Panc1 (cell line): ENCODE measurements at regions of chr13 and their contacts with region 1.

Region 1: GRCh38 chr13:19822673-19823072 is 39.9 kb upstream of the PSPC1 start:
- DNase-seq: no peak
- ATAC-seq: no peak
- H3K4me3 ChIP-seq: no peak overlapping the region
- H3K27ac ChIP-seq: no peak overlapping the region
- H3K4me1 ChIP-seq: no peaks in the 10 kb centered on the region
- H3K27me3 ChIP-seq: no peaks in the 10 kb centered on the region
- CTCF ChIP-seq: no peak

Region 2: DNA sequence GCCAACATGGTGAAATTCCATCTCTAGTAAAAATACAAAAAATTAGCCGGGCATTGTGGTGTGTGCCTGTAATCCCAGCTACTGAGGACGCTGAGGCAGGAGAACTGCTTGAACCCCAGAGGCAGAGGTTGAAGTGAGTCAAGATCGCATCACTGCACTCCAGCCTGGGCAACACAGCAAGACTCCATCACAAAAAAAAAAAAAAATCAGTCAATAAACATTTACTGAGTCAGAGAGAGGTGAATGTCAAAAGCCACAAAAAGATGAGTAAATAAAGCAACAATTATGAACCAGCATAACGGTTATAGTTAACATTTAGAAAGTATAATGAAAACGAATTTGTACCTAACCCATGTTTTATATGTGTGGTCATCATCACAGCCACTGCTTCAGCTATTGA is 63.0 kb before region 1 on chr13:
- CTCF ChIA-PET with region 1: no interaction called
- POLR2A ChIA-PET with region 1: interaction called, 11 read pairs
- in situ Hi-C with region 1: no loop called
- intact Hi-C with region 1: no loop called
- DNase-seq: no peak
- ATAC-seq: no peak
- H3K4me3 ChIP-seq: no peak overlapping the region
- H3K27ac ChIP-seq: no peak overlapping the region
- H3K4me1 ChIP-seq: no peaks in the 10 kb centered on the region
- H3K27me3 ChIP-seq: no peaks in the 10 kb centered on the region
- CTCF ChIP-seq: no peak